Mammary epithelial cell (primary cell): ENCODE measurements at regions of chr12 and their contacts with region 1.

Region 1: GRCh38 chr12:52278541-52279421 is 4.3 kb downstream of the KRT86 start:
- DNase-seq: peak; percentile 73
- H3K4me3 ChIP-seq: peak overlapping the region in 1 of 3 experiments; percentile 20
- H3K27ac ChIP-seq: peak overlapping the region; percentile 100
- H3K4me1 ChIP-seq: peaks cover 45% of the 10 kb centered on the region
- H3K27me3 ChIP-seq: no peaks in the 10 kb centered on the region
- CTCF ChIP-seq: peak; percentile 76 to 100

Region 2: GRCh38 chr12:52087961-52088820 is 190.6 kb before region 1 on chr12:
- CTCF ChIA-PET with region 1: no interaction called
- dilution Hi-C with region 1: no loop called
- in situ Hi-C with region 1: no loop called
- intact Hi-C with region 1: no loop called
- DNase-seq: no peak
- H3K4me3 ChIP-seq: no peak overlapping the region
- H3K27ac ChIP-seq: no peak overlapping the region
- H3K4me1 ChIP-seq: no peaks in the 10 kb centered on the region
- H3K27me3 ChIP-seq: peaks cover 4% of the 10 kb centered on the region
- CTCF ChIP-seq: no peak

Region 3: DNA sequence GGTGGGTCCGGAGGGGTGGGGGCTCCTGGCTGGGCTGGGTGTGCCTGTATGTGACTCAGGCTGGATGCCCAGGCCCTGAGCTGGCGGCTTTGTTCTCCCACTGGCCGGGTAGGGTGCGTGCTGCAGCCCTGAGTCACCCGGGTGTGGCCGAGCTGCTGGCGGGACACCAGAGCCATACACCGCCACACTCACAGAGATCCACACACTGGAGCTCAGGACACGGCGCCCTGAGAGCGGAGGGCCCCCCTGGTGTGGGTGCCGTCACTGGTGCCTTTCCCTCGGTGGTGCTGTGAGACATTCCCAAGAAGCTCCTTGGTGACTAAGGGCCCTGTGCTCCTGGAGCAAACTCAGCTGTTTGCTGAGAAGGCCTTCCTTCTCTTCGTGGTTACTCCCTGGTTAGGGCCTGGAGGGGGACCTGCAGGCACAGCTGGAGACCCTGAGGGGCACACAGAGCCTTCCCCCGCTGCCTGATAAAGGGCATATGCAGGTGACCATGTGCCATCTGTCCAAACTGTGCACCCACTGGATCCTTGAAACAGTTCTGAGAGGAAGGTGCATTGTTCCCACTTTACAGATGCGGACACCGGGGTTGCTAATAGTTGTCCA is 131.3 kb before region 1 on chr12:
- CTCF ChIA-PET with region 1: no interaction called
- dilution Hi-C with region 1: no loop called
- in situ Hi-C with region 1: no loop called
- intact Hi-C with region 1: loop called (anchors 1 kb)
- DNase-seq: peak; percentile 99
- H3K4me3 ChIP-seq: no peak overlapping the region
- H3K27ac ChIP-seq: peak overlapping the region; percentile 100
- H3K4me1 ChIP-seq: peaks cover 89% of the 10 kb centered on the region
- H3K27me3 ChIP-seq: no peaks in the 10 kb centered on the region
- CTCF ChIP-seq: no peak

Region 4: GRCh38 chr12:52192173-52192791 is 86.5 kb before region 1 on chr12:
- CTCF ChIA-PET with region 1: interaction called, 26 read pairs
- dilution Hi-C with region 1: no loop called
- in situ Hi-C with region 1: no loop called
- intact Hi-C with region 1: loop called (anchors 1 kb)
- DNase-seq: peak; percentile 97
- H3K4me3 ChIP-seq: no peak overlapping the region
- H3K27ac ChIP-seq: peak overlapping the region; percentile 51
- H3K4me1 ChIP-seq: peaks cover 57% of the 10 kb centered on the region
- H3K27me3 ChIP-seq: no peaks in the 10 kb centered on the region
- CTCF ChIP-seq: no peak

Region 5: DNA sequence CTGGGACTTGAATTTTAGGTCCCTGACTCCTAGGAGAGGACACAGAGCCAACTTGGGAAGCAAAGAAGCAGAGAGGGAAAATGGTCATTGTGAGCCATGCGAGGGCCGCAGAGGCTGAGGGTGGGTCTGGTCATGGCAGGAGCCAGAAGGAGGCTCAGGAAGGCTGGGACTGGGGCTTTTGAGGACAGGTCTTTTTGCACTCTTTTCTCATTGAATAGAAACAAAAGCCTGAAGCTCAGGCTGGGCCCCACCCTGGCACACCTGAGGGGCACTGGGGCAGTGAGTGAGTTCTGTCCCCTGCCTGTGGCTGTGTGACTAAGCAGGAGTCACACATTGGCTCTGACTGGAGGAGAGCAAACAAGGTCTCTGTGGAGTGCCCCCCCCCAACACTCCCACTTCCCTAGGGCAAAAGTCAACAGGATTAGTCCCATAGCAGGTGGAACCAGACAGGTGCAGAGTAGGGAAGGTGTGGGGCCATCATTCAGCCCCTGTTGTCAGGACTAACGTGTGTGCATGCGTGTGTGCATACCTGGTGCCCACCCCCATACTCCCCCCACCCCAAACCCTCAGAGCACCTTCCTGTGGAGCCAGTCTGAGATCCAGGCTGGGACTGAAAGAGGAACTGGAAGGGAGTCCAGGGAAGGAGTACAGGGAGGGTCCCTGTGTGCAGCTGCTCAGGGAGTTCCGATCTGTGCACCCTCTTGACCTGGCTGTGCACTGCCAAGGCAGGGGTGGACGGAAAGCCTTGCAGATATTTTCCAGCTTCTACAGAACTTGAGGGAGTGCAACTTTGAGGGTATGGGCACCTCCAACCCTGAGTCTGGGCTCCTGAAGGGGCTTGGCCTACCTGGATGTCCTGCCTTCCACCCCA is 42.7 kb before region 1 on chr12:
- CTCF ChIA-PET with region 1: no interaction called
- dilution Hi-C with region 1: loop called (anchors 5 kb)
- in situ Hi-C with region 1: no loop called
- intact Hi-C with region 1: no loop called
- DNase-seq: peak; percentile 51
- H3K4me3 ChIP-seq: peak overlapping the region; percentile 85 to 95 (median 93)
- H3K27ac ChIP-seq: peak overlapping the region; percentile 63
- H3K4me1 ChIP-seq: peaks cover 67% of the 10 kb centered on the region
- H3K27me3 ChIP-seq: no peaks in the 10 kb centered on the region
- CTCF ChIP-seq: no peak

Region 6: GRCh38 chr12:52243856-52244614 is 34.7 kb before region 1 on chr12:
- CTCF ChIA-PET with region 1: no interaction called
- dilution Hi-C with region 1: loop called (anchors 5 kb)
- in situ Hi-C with region 1: no loop called
- intact Hi-C with region 1: loop called (anchors 1 kb)
- DNase-seq: peak; percentile 96
- H3K4me3 ChIP-seq: no peak overlapping the region
- H3K27ac ChIP-seq: peak overlapping the region; percentile 72
- H3K4me1 ChIP-seq: peaks cover 52% of the 10 kb centered on the region
- H3K27me3 ChIP-seq: no peaks in the 10 kb centered on the region
- CTCF ChIP-seq: no peak

Region 7: DNA sequence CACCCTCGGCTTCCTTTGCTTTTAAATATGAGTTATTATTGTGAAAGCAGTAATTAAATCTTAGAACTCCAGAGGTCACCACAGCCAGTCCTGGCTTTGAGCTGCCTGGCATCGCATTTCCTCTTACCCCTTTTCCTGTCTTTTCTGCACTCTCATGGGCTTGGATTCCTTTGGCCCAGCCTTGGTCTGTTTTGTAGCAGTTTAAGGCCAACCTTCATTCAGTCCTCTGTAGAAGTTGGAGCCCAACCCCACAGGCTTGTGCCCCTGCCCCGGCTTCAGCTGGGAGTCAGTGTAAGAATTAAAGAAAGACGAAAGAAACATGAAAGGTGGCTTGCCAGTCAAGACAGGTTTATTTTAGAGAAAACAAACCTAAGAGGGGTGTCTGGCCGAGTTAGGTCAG is 18.9 kb before region 1 on chr12:
- CTCF ChIA-PET with region 1: interaction called, 3 read pairs
- dilution Hi-C with region 1: no loop called
- in situ Hi-C with region 1: no loop called
- intact Hi-C with region 1: loop called (anchors 1 kb)
- DNase-seq: no peak
- H3K4me3 ChIP-seq: no peak overlapping the region
- H3K27ac ChIP-seq: no peak overlapping the region
- H3K4me1 ChIP-seq: no peaks in the 10 kb centered on the region
- H3K27me3 ChIP-seq: no peaks in the 10 kb centered on the region
- CTCF ChIP-seq: peak in 1 of 2 donors; percentile 20